ENCODE measurements at regions of chr14 and their contacts with region 1.

Region 1: GRCh38 chr14:34539407-34540180 is at the start of gene EAPP:
- DNase-seq: peak; percentile 96
- H3K27ac ChIP-seq: peak within 1 kb of the TSS; percentile 84
- CTCF ChIP-seq: no peak

Region 2: GRCh38 chr14:34355584-34356263 is 183.9 kb before region 1 on chr14:
- CTCF ChIA-PET with region 1: no interaction called
- POLR2A ChIA-PET with region 1: no interaction called
- DNase-seq: peak; percentile 49
- H3K27ac ChIP-seq: no peak overlapping the region
- CTCF ChIP-seq: no peak

Region 3: GRCh38 chr14:34450958-34451357 is 88.6 kb before region 1 on chr14:
- CTCF ChIA-PET with region 1: no interaction called
- POLR2A ChIA-PET with region 1: interaction called, 19 read pairs
- DNase-seq: no peak
- H3K27ac ChIP-seq: no peak overlapping the region
- CTCF ChIP-seq: no peak